ENCODE measurements at regions of chr13 and their contacts with region 1.

Region 1: GRCh38 chr13:30802953-30803478 is 67.7 kb downstream of the ALOX5AP start:
- DNase-seq: peak; percentile 64 to 78
- ATAC-seq: peak; percentile 85 to 87
- H3K4me3 ChIP-seq: peak overlapping the region; percentile 49 to 72 (median 59)
- H3K27ac ChIP-seq: peak overlapping the region; percentile 25 to 79 (median 62)
- H3K4me1 ChIP-seq: peaks cover 0 to 16% of the 10 kb centered on the region in 2 donors
- H3K27me3 ChIP-seq: no peaks in the 10 kb centered on the region
- CTCF ChIP-seq: peak; percentile 88 to 96 (median 95)
- POLR2A ChIP-seq: no peak

Region 2: GRCh38 chr13:30132623-30133553 is 670.1 kb before region 1 on chr13:
- in situ Hi-C with region 1: loop called (anchors 25 kb)
- intact Hi-C with region 1: loop called (anchors 1 kb)
- DNase-seq: peak; percentile 83 to 89
- ATAC-seq: peak; percentile 90 to 99
- H3K4me3 ChIP-seq: no peak overlapping the region
- H3K27ac ChIP-seq: no peak overlapping the region
- H3K4me1 ChIP-seq: no peaks in the 10 kb centered on the region
- H3K27me3 ChIP-seq: no peaks in the 10 kb centered on the region
- CTCF ChIP-seq: peak; percentile 84 to 90 (median 90)
- POLR2A ChIP-seq: no peak

Region 3: DNA sequence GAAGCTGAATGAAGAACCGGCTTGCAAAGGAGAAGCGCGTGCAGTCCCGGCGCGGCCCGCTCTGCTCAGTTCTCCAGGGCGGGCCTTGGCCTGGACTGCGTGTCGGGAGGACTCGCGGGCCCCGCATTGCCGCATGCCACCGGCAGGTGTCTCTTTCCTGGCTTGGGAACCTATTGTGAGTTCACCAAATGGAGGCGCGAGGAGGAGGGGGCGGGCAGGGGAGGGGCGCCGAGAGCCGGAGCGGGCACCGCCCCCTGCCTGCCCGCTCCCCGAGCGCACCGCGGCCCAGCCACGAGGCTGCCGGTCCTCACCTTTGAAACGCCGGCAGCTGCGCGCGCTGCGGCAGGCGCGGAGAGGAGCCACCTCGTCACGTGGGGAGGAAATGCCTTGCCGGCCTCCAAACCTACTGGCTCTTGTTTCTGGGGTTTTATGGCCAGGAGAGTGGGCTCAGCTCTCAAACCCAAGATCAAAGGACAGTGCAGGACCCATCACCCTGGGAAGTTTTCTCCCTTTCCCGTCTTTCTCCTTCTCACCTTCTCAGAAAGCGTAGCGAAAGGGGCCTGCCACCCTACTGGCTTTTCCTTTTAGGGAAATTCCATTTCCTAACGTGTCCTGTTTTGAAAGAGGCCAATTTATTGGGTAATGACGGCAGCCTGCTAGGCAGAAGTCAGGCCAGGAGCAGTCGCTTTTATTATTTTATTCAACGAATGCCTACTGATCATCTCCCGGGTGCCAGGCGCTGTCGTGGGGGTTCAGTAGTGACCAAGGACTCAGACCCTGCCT is 394.5 kb before region 1 on chr13:
- in situ Hi-C with region 1: no loop called
- intact Hi-C with region 1: loop called (anchors 5 kb)
- DNase-seq: peak; percentile 91 to 95
- ATAC-seq: peak; percentile 93 to 96
- H3K4me3 ChIP-seq: peak overlapping the region; percentile 48 to 59 (median 52)
- H3K27ac ChIP-seq: peak overlapping the region; percentile 84 to 91 (median 88)
- H3K4me1 ChIP-seq: peaks cover 5 to 15% of the 10 kb centered on the region in 2 donors
- H3K27me3 ChIP-seq: no peaks in the 10 kb centered on the region
- CTCF ChIP-seq: peak; percentile 73 to 94 (median 86)
- POLR2A ChIP-seq: peak in 1 of 2 donors; percentile 12

Region 4: DNA sequence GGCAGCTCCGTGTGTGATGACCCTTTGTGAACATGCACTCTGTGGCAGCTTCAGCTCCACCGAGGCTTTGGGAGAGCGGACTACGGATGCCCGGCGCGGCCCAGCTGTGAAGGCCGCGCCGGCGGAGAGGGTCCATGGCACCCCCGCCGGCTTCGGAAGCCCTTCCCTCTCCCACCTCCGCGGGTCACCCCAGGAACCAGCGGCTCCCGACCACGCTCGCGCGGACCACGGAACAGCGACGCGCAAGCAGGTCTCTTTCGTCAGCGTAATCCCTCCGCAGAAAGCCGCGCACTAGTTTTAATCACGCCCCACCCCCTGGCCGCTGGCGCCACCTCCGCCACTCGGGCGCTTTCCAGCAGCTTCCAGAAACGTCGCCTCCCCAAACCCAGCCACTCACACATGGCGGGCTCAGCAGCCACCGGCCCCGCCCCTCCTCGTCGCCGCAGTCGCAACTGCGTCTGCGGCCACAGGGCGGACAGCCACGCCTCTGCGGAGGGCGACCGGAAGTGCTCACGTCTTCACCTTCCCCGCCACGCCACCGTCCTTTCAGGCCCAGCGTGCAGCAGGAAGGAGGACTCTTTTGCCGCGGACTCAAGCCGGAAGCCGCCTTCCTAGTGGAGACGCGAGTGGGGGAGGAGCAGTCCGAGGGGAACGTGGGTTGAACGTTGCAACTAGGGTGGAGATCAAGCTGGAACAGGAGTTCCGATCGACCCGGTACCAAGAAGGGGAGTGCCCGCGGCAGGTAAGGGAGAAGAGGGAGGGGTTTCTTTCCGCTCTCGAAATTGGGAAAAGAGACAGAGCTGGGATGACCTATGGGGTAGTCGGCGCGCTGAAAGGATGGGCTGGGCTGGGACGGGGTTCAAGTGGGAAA is 185.5 kb before region 1 on chr13 and contains the start of gene USPL1:
- in situ Hi-C with region 1: no loop called
- intact Hi-C with region 1: loop called (anchors 2 kb)
- DNase-seq: peak; percentile 96 to 98
- ATAC-seq: peak; percentile 84 to 87
- H3K4me3 ChIP-seq: peak within 1 kb of the TSS; percentile 81 to 91 (median 86)
- H3K27ac ChIP-seq: peak within 1 kb of the TSS; percentile 91 to 100 (median 98)
- H3K4me1 ChIP-seq: peaks cover 33 to 40% of the 10 kb centered on the region in 2 donors
- H3K27me3 ChIP-seq: no peaks in the 10 kb centered on the region
- CTCF ChIP-seq: peak; percentile 34 to 63 (median 51)
- POLR2A ChIP-seq: peak; percentile 93 to 96
- total RNA-seq, gene USPL1: 14.2 to 18.4 (median 15.6) TPM

Region 5: GRCh38 chr13:30659980-30660379 is 143.0 kb before region 1 on chr13:
- in situ Hi-C with region 1: no loop called
- intact Hi-C with region 1: no loop called
- DNase-seq: no peak
- ATAC-seq: no peak
- H3K4me3 ChIP-seq: no peak overlapping the region
- H3K27ac ChIP-seq: no peak overlapping the region
- H3K4me1 ChIP-seq: peaks cover 5 to 9% of the 10 kb centered on the region in 2 donors
- H3K27me3 ChIP-seq: no peaks in the 10 kb centered on the region
- CTCF ChIP-seq: no peak
- POLR2A ChIP-seq: no peak

Region 6: DNA sequence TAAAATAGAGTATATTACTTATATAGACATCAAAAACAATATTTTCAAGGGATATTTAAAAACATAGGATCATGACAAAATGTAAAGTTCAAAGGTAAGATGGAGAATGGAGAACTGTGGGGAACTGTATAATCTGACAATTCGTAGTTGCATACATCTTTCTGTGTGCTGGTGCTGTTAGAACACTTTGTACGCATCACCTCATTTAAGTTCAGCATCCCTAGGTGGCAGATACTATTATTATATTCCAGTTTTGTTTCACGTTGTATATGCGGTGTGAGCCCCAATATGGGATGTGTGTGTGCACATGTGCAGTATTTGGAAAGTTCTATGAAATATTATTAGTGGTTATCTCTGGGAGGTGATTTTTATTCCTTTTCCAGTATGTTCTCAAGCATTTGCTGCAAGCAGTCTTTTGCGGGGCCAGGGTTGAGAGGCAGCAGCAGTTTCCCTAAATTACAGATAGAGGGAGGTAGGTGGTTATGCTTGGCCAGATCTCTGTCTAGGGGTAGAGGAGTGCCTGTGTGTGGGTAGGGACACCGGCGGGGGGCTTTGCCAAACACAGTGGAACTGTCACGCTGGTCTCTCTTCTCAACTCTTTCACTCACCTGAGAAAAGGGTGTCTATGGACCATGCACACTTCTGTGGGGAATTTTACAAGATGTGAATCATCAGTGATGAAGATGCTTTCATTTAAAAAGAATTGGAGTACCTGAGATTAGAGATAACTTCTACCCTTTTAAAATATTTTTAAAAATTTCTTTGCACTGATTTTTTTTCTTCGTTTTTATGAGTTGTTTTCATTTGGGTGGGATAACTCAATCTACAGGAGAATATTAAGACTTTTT is 123.3 kb before region 1 on chr13:
- in situ Hi-C with region 1: loop called in 2 of 4 experiments (anchors 10 kb)
- intact Hi-C with region 1: loop called (anchors 2 kb)
- DNase-seq: no peak
- ATAC-seq: peak; percentile 62 to 68
- H3K4me3 ChIP-seq: no peak overlapping the region
- H3K27ac ChIP-seq: no peak overlapping the region
- H3K4me1 ChIP-seq: no peaks in the 10 kb centered on the region
- H3K27me3 ChIP-seq: no peaks in the 10 kb centered on the region
- CTCF ChIP-seq: peak in 2 of 5 experiments; percentile 38 to 45
- POLR2A ChIP-seq: no peak

Region 7: GRCh38 chr13:30845297-30846214 is 42.5 kb after region 1 on chr13:
- in situ Hi-C with region 1: no loop called
- intact Hi-C with region 1: no loop called
- DNase-seq: no peak
- ATAC-seq: no peak
- H3K4me3 ChIP-seq: no peak overlapping the region
- H3K27ac ChIP-seq: no peak overlapping the region
- H3K4me1 ChIP-seq: no peaks in the 10 kb centered on the region
- H3K27me3 ChIP-seq: no peaks in the 10 kb centered on the region
- CTCF ChIP-seq: no peak
- POLR2A ChIP-seq: no peak

Region 8: GRCh38 chr13:31044377-31045285 is 241.6 kb after region 1 on chr13:
- in situ Hi-C with region 1: no loop called
- intact Hi-C with region 1: loop called (anchors 10 kb)
- DNase-seq: peak; percentile 33 to 52
- ATAC-seq: peak; percentile 65 to 80
- H3K4me3 ChIP-seq: no peak overlapping the region
- H3K27ac ChIP-seq: no peak overlapping the region
- H3K4me1 ChIP-seq: peaks cover 0 to 4% of the 10 kb centered on the region in 2 donors
- H3K27me3 ChIP-seq: peaks cover 0 to 3% (median 0%) of the 10 kb centered on the region in 3 donors
- CTCF ChIP-seq: peak; percentile 50 to 92 (median 72)
- POLR2A ChIP-seq: no peak

Measured in gastrocnemius medialis (tissue), 4 donors.